ENCODE measurements at regions of chr10 and their contacts with region 1.

Region 1: DNA sequence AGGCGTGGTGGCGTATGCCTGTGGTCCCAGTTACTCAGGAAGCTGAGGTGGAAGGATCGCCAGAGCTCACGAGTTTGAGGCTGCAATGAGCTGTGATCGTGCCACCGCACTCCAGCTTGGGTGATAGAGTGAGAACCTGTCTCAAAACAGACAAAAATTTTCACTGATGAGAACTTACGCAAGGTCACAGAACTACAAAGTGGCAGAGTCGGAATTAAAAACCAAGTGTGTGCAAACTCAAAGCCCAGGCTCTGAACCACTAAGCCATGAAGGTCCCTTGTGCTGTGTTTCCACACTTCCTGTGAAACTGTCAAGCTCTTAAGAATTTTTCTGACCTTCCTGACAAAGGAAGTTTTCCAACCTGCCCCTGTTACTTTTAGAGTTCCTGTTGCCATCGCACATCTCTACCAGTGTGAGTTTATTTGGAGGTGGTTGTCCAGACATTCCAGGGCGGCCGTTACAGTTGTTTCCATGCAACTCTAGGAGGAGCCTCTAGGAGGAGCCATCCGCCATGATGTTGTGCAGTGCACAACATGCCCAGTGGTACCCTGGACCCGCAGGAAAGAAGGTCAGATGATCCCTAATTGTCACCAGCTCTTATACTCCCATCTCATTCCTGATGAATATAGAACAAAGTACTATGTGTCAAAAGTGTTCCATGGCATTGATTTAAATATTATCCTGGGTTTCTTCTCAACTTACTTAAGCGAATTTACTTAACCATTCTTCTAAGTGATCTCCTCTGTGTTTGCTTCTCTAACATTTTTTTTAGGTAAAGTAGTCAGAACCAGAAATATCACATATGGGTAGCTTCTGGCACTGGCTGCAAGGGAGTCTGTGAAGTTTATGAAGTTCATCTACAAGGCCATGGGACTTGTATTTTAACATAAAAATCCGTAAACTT is 49.0 kb upstream of the LYZL1 start:
- DNase-seq: peak; percentile 34 to 47
- ATAC-seq: peak; percentile 80 to 94; a peak in 5 of 6 replicates
- H3K4me3 ChIP-seq: no peak overlapping the region
- H3K27ac ChIP-seq: no peak overlapping the region
- H3K4me1 ChIP-seq: no peaks in the 10 kb centered on the region
- CTCF ChIP-seq: peak; percentile 53
- EP300 ChIP-seq: no peak
- POLR2A ChIP-seq: no peak
- RAD21 ChIP-seq: peak; percentile 60 to 70

Region 2: GRCh38 chr10:29204070-29204800 is 35.6 kb before region 1 on chr10:
- CTCF ChIA-PET with region 1: no interaction called
- POLR2A ChIA-PET with region 1: no interaction called
- DNase-seq: no peak
- ATAC-seq: no peak
- H3K4me3 ChIP-seq: no peak overlapping the region
- H3K27ac ChIP-seq: no peak overlapping the region
- H3K4me1 ChIP-seq: no peaks in the 10 kb centered on the region
- CTCF ChIP-seq: no peak
- EP300 ChIP-seq: no peak
- POLR2A ChIP-seq: no peak
- RAD21 ChIP-seq: no peak

Region 3: GRCh38 chr10:29257106-29257783 is 17.4 kb after region 1 on chr10:
- CTCF ChIA-PET with region 1: interaction called, 12 read pairs
- POLR2A ChIA-PET with region 1: no interaction called
- DNase-seq: peak in 1 of 2 experiments; percentile 33
- ATAC-seq: peak; percentile 69 to 73; a peak in 5 of 6 replicates
- H3K4me3 ChIP-seq: no peak overlapping the region
- H3K27ac ChIP-seq: peak overlapping the region in 1 of 2 experiments; percentile 58; a peak in 2 of 6 replicates
- H3K4me1 ChIP-seq: peaks cover 28% of the 10 kb centered on the region
- CTCF ChIP-seq: no peak
- EP300 ChIP-seq: no peak
- POLR2A ChIP-seq: no peak
- RAD21 ChIP-seq: no peak; a peak in 1 of 5 replicates

Measured in A549 (cell line).